Activated B cell treated with CpG ODN at 0.5 μM for 24 hours (primary cell): ENCODE measurements at regions of chr17 and their contacts with region 1.

Region 1: DNA sequence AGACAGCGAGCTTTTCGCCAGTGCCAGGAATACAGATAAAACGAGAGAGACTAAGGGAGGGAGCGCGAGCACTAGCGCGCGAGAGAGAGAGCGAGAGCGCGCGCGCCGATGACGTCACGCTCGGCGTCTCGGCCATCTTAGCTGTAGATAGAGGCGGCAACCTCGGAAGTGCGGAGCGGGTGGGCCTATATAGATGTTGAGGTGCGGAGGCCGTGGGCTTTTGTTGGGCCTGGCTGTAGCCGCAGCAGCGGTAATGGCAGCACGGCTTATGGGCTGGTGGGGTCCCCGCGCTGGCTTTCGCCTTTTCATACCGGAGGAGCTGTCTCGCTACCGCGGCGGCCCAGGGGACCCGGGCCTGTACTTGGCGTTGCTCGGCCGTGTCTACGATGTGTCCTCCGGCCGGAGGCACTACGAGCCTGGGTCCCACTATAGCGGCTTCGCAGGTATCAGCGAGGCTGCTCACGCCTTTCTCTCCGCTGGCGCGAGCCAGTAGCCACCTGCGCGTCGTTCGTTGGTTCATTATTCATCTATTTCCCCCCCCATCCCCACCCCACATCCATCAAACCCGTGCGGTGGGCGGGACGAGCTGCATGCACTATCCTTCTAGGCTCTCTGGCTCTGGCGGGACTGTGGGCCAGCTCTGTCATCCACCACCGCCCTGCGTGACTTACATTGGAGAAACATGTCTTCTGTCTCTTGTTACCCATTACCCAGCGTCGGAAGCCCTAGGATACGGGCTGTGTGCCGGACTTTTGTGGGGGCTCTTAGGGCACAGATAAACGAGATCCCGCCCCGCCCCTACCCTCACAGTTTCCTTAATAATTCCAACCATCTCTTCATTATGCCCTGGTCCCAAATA is 795 bp downstream of the CYB5D2 start:
- DNase-seq: peak; percentile 84
- ATAC-seq: peak; percentile 70
- H3K4me3 Mint-ChIP-seq: peak overlapping the region; percentile 98
- H3K27ac Mint-ChIP-seq: peak overlapping the region; percentile 99
- H3K4me1 Mint-ChIP-seq: peaks cover 37% of the 10 kb centered on the region
- H3K27me3 Mint-ChIP-seq: no peaks in the 10 kb centered on the region
- CTCF ChIP-seq: no peak

Region 2: DNA sequence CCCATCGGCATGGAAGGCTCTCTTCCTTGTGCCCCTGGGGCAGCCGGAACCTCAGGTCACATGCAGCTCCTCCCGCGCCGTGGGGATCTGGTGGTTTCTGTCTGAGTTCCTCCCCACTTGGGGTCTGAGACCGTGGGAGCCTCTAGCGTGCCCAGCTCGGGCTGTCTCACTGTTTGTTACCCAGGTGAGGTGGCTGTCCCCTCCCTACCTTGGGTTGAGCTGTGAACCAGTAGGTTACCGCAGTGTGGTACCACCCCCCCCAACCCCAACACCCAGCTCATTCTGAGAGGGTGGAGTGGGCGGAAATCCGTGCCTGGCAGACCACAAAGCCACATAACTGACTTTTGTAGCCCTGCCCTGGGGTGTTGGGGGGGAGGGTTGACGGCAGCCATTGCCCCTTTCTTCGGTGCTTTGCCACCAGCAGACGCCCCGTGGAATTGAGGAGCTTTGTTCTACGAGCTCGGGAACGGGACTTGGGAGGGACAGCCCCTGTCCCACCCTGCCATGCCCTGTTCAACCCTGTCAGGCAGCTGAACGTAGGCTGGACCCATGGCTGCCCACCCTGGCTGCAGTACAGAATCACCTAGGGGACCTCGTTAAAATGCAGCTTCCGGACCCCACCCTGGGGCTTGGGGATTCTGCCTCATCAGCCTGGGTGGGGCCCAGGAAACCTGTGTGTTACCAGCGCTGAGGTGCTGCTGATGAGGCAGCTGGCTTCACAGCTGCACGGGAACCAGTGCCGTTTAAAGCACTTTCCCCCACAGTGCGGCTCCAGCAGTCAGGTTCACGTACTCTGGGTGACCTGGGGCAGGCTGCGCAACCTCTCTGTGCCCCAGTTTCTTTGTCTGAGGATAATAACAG is 1329.1 kb before region 1 on chr17:
- CTCF ChIA-PET with region 1: no interaction called
- POLR2A ChIA-PET with region 1: interaction called, 11 read pairs
- intact Hi-C with region 1: no loop called
- DNase-seq: peak; percentile 67
- ATAC-seq: peak; percentile 84
- H3K4me3 Mint-ChIP-seq: peak overlapping the region; percentile 64
- H3K27ac Mint-ChIP-seq: peak overlapping the region; percentile 73
- H3K4me1 Mint-ChIP-seq: peaks cover 46% of the 10 kb centered on the region
- H3K27me3 Mint-ChIP-seq: no peaks in the 10 kb centered on the region
- CTCF ChIP-seq: no peak

Region 3: DNA sequence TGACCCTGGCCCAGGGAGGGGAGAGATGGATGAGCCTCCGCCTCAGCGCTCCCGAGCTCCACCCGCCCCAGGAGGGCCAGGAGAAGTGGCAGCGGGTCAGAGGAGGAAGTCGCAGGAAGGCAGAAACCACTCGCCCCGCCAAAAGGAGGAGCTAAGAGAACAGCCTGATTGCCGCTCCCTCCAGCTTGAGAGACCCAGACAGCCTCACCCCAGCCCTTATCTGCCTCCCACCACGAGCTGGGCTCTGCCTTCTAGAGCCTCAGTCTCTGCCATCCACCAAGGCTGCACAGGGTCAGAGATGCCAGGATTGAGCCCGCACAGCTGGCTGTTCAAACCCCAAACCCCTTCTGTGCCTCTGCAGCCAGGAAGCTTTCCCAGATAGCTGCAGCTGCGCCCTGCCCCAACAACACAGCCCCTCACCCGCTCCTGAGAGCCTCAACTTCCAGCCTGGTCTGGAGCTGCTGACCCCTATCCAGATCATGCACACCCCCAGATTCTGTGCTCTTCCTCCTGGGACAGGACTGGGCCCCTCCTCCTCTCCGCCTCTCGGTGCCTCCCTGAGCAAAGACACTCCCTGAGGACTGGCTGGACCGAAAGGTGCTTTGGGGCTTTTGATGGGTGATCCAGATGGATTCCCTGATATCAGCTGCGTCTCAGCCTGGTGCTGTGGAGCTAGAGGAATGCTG is 178.5 kb before region 1 on chr17:
- CTCF ChIA-PET with region 1: no interaction called
- POLR2A ChIA-PET with region 1: interaction called, 9 read pairs
- intact Hi-C with region 1: loop called (anchors 2 kb)
- DNase-seq: peak; percentile 64
- ATAC-seq: peak; percentile 49
- H3K4me3 Mint-ChIP-seq: peak overlapping the region; percentile 87
- H3K27ac Mint-ChIP-seq: peak overlapping the region; percentile 94
- H3K4me1 Mint-ChIP-seq: peaks cover 77% of the 10 kb centered on the region
- H3K27me3 Mint-ChIP-seq: no peaks in the 10 kb centered on the region
- CTCF ChIP-seq: no peak

Region 4: DNA sequence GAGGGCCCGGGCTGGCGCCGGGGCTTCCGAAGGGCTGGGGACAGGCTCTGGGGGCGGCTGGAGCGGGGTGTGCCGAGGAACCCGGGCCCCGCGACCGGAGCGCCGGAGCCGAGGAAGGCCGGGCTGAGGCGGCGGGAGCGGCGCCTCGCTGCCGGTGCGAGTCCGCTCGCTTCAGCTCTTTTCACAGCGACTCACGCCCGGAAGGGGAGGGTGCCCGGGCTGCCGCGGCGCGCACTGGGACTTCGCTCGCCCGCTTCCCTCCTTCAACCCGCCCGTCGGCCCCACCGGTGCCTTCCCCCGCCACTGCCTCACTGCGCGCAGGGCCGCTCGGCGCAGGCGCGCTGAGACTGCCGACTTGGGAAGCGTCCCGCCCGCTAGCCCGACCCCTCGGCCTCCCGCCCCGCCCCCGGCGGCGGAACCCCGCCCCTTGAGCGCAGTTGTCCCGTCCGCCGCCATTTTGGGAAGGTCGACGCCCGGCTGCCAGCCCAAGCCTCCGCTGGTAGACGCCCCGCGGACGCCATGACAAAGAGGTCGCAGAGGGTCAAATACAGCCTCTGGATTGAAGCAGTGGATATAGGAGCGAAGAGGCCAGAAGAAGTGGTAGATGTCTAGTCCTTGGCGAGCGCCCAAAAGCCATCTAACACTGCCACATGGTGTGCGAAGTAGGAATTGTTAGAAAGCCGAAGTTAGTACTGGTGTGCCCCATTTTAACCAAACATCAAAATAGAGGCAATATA is 222.7 kb after region 1 on chr17 and contains the start of gene UBE2G1:
- CTCF ChIA-PET with region 1: no interaction called
- POLR2A ChIA-PET with region 1: interaction called, 17 read pairs
- intact Hi-C with region 1: loop called (anchors 1 kb)
- DNase-seq: peak; percentile 99
- ATAC-seq: peak; percentile 81
- H3K4me3 Mint-ChIP-seq: peak within 1 kb of the TSS; percentile 86
- H3K27ac Mint-ChIP-seq: peak within 1 kb of the TSS; percentile 93
- H3K4me1 Mint-ChIP-seq: peaks cover 47% of the 10 kb centered on the region
- H3K27me3 Mint-ChIP-seq: no peaks in the 10 kb centered on the region
- CTCF ChIP-seq: no peak
- total RNA-seq, gene UBE2G1: 66.5 and 66.6 TPM in 2 replicates

Region 5: DNA sequence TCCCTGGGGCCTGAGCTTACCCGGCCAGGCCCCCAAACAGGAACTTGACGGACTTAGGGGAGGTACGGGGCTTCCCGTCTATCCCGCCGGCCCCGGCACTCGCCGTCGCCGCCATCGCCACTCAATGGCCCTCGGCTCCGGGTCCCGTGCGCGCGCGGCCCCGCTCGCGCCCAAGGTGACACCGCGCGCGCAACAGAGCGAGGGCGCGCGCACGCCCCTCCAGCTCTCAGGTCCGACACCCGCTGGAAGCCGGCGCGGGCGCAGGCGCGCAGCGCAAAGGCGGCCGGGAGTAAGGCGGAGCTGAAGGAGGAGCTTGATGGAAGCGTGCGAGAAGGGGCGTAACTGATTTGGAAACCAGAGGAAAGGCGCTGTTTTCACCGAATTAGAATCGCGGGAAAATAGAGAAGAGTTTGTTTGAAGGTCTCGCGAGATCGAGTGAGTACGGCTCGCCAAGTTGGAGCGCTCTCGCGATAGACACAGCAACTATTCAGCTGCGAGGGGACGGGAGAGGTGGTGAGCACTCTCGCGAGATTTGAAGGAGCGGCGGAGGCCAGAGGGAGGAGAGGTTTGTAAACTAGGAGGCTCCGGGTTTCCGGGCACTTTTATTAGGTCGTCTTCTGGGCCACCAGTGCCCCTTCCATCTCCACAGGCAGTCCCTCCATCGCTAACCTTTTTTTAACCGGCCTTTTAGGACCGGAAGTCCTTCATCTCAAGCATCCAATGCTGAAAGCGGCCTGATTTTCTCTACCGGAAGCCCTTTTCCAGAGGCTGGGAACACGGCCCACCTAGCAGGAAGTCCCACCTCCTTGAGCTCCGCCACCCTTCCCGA is 796.2 kb after region 1 on chr17 and contains the starts of genes RNF167 and SLC25A11:
- CTCF ChIA-PET with region 1: no interaction called
- POLR2A ChIA-PET with region 1: interaction called, 7 read pairs
- intact Hi-C with region 1: loop called (anchors 5 kb)
- DNase-seq: peak; percentile 93
- ATAC-seq: peak; percentile 84
- H3K4me3 Mint-ChIP-seq: peak within 1 kb of the TSS; percentile 97
- H3K27ac Mint-ChIP-seq: peak within 1 kb of the TSS; percentile 98
- H3K4me1 Mint-ChIP-seq: peaks cover 69% of the 10 kb centered on the region
- H3K27me3 Mint-ChIP-seq: no peaks in the 10 kb centered on the region
- CTCF ChIP-seq: no peak
- total RNA-seq, gene RNF167: 93.3 and 108 TPM in 2 replicates
- total RNA-seq, gene SLC25A11: 35.3 and 35.8 TPM in 2 replicates

Region 6: DNA sequence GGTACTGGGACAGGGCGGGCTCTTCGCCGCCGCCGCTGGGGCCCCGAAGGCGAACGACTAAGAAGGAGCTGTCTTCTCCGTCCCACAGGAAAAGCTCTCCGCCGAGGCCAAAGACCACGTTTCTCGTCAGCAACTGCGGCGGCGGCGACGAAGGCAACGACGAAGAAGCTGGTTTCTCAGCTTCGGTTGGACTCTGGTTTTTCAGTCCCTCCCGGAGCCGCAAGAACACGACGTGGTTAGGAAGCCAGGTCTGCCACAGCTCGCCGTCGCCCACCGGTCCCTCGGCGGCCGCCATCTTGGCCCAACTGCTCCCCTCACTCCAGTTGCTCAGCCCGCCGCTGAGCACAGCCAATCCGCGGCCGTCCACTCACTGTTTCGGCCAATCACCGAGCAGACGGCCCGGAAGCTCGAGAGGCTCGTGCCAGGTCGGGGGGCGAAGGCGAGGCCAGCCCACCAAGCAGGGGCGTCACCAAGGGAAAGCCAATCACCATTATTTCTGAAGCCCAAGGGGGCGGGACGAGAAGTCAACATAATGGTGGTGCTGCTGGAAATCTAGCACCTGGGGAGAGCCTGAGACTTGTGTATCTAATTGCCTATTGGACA is 1275.7 kb after region 1 on chr17 and contains the start of gene NUP88:
- CTCF ChIA-PET with region 1: no interaction called
- POLR2A ChIA-PET with region 1: no interaction called
- intact Hi-C with region 1: loop called (anchors 5 kb)
- DNase-seq: peak; percentile 87
- ATAC-seq: peak; percentile 86
- H3K4me3 Mint-ChIP-seq: peak within 1 kb of the TSS; percentile 100
- H3K27ac Mint-ChIP-seq: peak within 1 kb of the TSS; percentile 100
- H3K4me1 Mint-ChIP-seq: peaks cover 49% of the 10 kb centered on the region
- H3K27me3 Mint-ChIP-seq: no peaks in the 10 kb centered on the region
- CTCF ChIP-seq: no peak
- total RNA-seq, gene NUP88: 158 and 187 TPM in 2 replicates